MCF 10A (cell line): ENCODE measurements at regions of chr11 and their contacts with region 1.

Region 1: DNA sequence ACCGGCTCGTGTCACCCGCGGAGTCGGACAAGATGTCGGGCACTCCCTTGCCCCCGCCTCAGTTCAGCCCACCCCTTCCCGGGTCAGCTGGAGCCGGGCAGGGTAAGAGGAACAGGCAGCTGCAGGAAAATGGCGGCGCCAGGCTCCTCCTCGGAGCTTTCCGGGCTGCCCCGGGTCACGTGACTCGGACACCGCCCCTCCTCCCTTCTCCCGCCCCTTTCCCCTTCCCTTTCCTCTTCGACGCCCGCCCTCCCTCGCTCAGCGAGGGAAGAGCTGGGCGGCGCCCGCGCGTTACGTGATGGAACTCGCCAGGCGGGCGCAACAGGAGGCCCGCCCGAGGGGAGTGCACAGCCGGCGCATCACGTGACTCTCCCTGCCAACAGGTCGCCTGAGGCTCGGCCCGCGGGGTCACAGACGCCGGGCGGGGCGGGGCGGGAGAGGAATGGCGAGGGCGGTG is at the start of gene PICALM:
- DNase-seq: peak; percentile 98
- H3K4me3 Mint-ChIP-seq: peak within 1 kb of the TSS; percentile 98
- H3K27ac Mint-ChIP-seq: peak within 1 kb of the TSS; percentile 99
- H3K4me1 Mint-ChIP-seq: peaks cover 17% of the 10 kb centered on the region
- H3K27me3 Mint-ChIP-seq: no peaks in the 10 kb centered on the region
- CTCF ChIP-seq: no peak
- total RNA-seq, gene PICALM: 137 and 141 TPM in 2 replicates

Region 2: DNA sequence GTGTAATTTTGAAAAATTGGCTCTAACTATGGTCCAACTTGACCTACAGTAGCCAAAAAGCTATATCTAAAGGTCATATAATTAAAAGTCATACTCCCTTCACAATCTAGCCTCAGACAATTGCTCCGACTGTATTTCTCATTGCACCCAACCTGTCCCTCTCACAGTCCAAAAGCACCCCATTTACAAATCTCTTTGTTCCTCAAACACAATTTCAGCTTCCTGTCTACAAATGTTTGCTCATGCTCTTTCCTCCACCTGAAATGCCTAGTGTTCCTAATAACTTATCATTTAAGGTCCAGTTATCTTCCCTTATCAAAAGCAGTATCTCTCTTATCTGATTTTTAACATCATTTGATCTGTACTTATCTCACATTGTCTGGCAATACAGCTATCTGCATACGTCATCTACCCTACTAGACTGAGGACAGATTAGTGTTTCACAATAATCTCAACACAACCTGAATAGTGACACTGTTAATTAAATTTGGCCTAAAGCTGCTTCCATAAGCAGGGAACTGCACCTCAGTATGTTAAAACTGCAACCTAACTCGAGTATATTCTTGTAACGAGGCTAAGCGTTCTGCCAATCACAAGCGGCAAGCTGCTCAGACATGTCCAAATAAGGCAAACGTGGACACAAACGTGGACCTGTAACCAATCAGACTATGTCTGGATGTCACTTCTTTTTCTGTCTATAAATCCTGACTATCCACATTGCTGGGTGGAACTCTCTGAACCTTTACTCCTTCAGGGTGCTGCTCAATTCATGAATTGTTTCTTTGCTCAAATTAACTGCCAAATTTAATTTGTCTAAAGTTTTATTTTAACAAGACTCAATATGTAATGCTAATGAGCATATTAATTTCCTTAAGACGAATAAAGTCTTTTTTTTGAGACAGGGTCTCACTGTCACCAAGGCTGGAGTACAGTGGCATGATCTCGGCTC is 16.0 kb before region 1 on chr11:
- CTCF ChIA-PET with region 1: interaction called, 3 read pairs
- POLR2A ChIA-PET with region 1: interaction called, 13 read pairs
- intact Hi-C with region 1: no loop called
- DNase-seq: no peak
- H3K4me3 Mint-ChIP-seq: no peak overlapping the region
- H3K27ac Mint-ChIP-seq: no peak overlapping the region
- H3K4me1 Mint-ChIP-seq: peaks cover 25% of the 10 kb centered on the region
- H3K27me3 Mint-ChIP-seq: no peaks in the 10 kb centered on the region
- CTCF ChIP-seq: no peak

Region 3: DNA sequence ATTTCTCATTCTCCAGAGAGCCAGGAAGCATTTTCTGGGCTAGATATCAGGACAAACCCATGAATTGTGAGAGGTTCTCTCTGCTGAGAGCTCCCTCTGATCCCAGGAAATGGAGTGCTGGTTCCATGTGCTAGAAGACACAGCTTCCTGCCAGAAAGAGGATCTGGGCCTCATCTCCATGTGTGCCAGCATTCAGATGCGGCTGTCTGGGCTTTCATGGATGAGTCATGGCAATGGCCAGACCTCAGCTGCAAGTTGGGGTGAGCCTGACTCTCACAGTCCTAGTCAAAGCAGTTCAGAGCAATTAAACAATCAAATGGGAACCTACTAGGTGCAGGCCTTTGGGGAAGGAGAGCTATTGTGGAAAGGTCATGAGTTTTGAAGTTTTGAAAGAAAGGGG is 93.3 kb after region 1 on chr11:
- CTCF ChIA-PET with region 1: interaction called, 4 read pairs
- POLR2A ChIA-PET with region 1: interaction called, 61 read pairs
- intact Hi-C with region 1: no loop called
- DNase-seq: peak; percentile 76
- H3K4me3 Mint-ChIP-seq: no peak overlapping the region
- H3K27ac Mint-ChIP-seq: peak overlapping the region; percentile 28
- H3K4me1 Mint-ChIP-seq: peaks cover 34% of the 10 kb centered on the region
- H3K27me3 Mint-ChIP-seq: no peaks in the 10 kb centered on the region
- CTCF ChIP-seq: no peak

Region 4: DNA sequence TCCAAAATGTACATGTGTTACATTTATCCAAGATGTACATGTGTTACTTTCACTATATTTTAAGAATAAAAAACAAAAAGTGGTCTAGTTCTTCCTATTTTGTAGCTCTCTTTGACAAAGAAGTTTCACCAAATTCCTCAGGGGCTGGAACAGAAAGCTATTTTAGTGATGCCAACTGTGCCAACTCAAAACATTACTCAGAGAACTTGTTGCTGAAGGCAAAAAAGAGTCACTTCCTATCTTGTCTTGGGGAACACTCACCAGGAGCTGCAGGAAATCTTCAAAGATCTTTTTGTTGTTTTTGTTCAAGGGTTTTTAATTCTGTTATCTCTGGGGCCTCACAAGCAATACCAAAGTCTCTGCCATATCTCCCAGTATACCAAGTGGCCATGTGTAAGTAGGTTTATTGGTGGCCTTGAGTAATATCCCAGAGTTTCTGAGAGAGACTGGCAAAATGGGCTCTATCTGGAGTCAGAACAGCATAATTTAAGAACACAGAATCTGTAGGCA is 162.0 kb after region 1 on chr11:
- CTCF ChIA-PET with region 1: no interaction called
- POLR2A ChIA-PET with region 1: interaction called, 18 read pairs
- intact Hi-C with region 1: no loop called
- DNase-seq: peak; percentile 40
- H3K4me3 Mint-ChIP-seq: no peak overlapping the region
- H3K27ac Mint-ChIP-seq: no peak overlapping the region
- H3K4me1 Mint-ChIP-seq: peaks cover 18% of the 10 kb centered on the region
- H3K27me3 Mint-ChIP-seq: no peaks in the 10 kb centered on the region
- CTCF ChIP-seq: no peak

Region 5: GRCh38 chr11:86497181-86497701 is 428.3 kb after region 1 on chr11:
- CTCF ChIA-PET with region 1: no interaction called
- POLR2A ChIA-PET with region 1: no interaction called
- intact Hi-C with region 1: no loop called
- DNase-seq: no peak
- H3K4me3 Mint-ChIP-seq: no peak overlapping the region
- H3K27ac Mint-ChIP-seq: no peak overlapping the region
- H3K4me1 Mint-ChIP-seq: peaks cover 7% of the 10 kb centered on the region
- H3K27me3 Mint-ChIP-seq: no peaks in the 10 kb centered on the region
- CTCF ChIP-seq: no peak